Activated T-helper 2 cell treated with anti-CD3 and anti-CD28 coated beads, Interferon-gamma antibody, Interleukin-2, Interleukin-4, amounts not matched to agents 10 μg/mL and 5 μg/mL and 100 μg/mL, durations not matched to agents 14 hours and 24 hours and 36 hours (primary cell): ENCODE measurements at regions of chr16 and their contacts with region 1.

Region 1: DNA sequence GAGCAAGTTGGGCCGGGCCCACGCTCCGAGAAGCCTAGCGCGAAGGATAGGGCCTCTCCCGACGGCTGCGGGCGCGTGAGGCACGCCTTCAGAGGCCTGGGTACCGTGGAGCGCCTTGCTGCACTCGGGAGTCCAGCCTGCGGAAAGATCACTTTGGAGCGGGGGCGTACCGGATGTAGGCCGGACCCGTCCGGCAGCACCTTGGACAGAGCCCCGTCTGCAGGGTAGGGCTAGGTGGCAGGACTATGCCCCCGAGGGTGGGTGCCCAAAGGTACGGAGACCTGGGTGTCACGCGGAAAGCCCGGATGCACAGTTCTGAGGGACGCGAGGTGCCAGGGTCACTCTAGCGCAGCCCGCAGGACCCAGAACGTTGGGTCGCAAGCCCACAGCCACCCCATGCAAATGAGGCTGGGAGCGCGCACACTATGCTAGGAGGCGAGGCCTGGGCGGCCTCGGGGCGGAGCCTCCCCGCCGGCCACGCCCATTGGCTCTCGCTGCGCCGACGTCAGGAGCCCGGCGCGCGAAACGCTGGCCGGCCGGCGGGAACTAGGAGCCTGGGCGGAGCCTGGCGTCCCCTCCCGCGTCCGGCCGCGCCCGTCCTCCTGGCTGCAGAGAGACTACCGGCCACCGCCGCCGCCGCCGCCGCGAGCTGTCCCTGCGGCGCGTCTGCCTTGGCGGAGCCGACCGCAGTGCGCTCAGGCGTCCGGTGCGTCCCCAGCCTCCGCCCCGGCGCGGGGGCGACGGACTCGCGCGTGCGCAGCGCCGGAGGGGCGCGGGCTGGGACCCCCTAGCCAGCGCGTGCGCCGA is at the start of gene PAQR4:
- DNase-seq: peak; percentile 83
- H3K4me3 Mint-ChIP-seq: peak within 1 kb of the TSS; percentile 76
- H3K27ac Mint-ChIP-seq: peak within 1 kb of the TSS; percentile 38
- H3K4me1 Mint-ChIP-seq: peaks cover 23% of the 10 kb centered on the region
- H3K27me3 Mint-ChIP-seq: peaks cover 17% of the 10 kb centered on the region
- total RNA-seq, gene PAQR4: 46.9 and 49.9 TPM in 2 replicates

Region 2: DNA sequence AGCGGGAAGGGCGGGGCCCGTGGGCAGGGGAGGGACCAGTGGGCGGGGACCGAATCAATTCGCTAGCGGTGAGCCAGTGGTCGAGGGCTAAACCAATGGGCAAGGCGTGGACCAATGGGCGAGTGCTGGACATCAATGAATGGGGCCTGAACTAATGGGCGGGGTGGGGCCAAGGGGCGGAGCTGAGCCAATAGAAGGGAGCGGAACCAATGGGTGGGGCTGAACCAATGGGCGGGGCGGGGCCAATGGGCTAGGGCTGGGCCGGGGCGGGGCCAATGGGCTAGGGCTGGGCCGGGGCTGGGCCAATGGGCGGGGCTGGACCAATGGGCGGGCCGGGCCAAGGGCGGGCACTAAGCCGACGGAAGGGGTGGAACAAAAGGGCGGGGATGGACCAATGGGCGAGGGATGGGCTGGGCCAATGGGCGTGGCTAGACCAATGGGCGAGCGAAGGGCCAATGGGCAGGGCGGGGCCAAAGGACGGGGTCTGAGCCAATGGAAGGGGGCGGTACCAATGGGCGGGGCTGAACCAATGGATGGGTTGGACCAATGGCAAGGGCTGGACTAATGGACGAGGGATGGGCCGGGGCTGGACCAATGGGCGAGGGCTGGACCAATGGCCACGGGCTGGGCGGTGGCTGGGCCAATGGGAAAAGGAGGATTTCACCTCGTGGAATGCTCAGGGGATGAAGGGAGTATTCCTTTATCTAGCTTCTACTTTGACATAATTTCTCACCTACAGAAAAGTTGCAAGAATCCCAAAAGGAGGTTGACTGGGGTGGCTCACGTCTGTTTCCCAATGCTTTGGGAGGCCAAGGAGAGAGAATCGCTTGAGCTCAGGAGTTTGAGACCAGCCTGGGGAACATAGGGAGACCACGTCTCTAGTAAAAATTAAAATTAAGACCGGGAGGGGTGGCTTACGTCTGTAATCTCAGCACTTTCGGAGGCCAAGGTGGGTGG is 63.2 kb before region 1 on chr16:
- intact Hi-C with region 1: loop called (anchors 2 kb)
- DNase-seq: peak; percentile 95
- H3K4me3 Mint-ChIP-seq: peak overlapping the region; percentile 92
- H3K27ac Mint-ChIP-seq: peak overlapping the region; percentile 58
- H3K4me1 Mint-ChIP-seq: peaks cover 19% of the 10 kb centered on the region
- H3K27me3 Mint-ChIP-seq: peaks cover 4% of the 10 kb centered on the region

Region 3: GRCh38 chr16:2980227-2981086 is 11.5 kb after region 1 on chr16 and contains the start of gene PKMYT1:
- intact Hi-C with region 1: loop called (anchors 2 kb)
- DNase-seq: peak; percentile 95
- H3K4me3 Mint-ChIP-seq: peak within 1 kb of the TSS; percentile 90
- H3K27ac Mint-ChIP-seq: peak within 1 kb of the TSS; percentile 88
- H3K4me1 Mint-ChIP-seq: peaks cover 9% of the 10 kb centered on the region
- H3K27me3 Mint-ChIP-seq: no peaks in the 10 kb centered on the region
- total RNA-seq, gene PKMYT1: 102 and 106 TPM in 2 replicates